Mammary epithelial cell (primary cell): ENCODE measurements at regions of chr7 and their contacts with region 1.

Region 1: DNA sequence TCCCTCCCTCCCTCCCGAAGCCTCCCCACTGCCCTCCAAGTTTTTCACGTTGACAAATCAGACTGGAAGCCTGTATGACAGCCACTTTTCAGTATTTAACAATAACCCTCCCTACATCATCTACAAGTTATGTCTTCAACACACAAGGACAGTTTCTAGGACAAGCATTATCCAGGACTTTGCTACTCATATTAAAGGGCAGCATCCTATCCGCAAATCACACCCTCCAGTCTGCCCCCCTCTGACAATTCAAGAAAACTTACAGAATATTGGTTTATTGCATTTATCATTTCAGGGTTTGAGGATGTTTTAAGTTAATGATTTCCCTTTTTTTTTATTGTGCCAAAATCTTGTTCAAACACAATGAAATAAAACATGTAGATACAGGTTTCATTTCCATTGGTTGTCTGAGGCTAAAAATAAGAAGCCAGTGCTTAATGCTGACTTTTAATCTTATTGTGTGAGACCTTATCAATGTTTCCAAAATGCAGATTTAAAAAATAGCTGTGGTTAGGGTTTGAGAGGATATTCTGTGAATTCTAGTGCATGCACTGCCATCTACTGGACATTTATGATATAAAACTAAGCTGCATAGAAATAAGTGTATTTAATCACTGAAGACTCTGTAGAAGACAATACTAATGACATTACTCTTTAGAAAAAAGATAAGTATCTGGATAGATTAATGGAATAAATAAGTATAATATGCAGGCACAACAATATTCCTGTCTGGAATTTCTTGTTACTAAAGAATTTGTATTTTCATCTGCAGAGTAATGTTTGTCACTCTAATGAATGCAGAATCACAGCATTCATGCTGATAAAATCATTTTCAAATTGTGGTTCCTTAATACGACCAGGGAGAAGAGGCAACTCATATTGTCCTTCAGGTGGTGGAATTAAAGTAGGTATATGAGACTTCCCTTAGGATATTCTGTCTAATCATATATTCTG is 64.1 kb downstream of the CAV1 start:
- DNase-seq: peak; percentile 44
- H3K4me3 ChIP-seq: no peak overlapping the region
- H3K27ac ChIP-seq: peak overlapping the region; percentile 32
- H3K4me1 ChIP-seq: peaks cover 16% of the 10 kb centered on the region
- H3K27me3 ChIP-seq: no peaks in the 10 kb centered on the region
- CTCF ChIP-seq: peak; percentile 45 to 57

Region 2: GRCh38 chr7:116138202-116138801 is 450.6 kb before region 1 on chr7:
- CTCF ChIA-PET with region 1: no interaction called
- dilution Hi-C with region 1: no loop called
- in situ Hi-C with region 1: no loop called
- intact Hi-C with region 1: loop called (anchors 1 kb)
- DNase-seq: peak; percentile 69
- H3K4me3 ChIP-seq: no peak overlapping the region
- H3K27ac ChIP-seq: peak overlapping the region; percentile 61
- H3K4me1 ChIP-seq: peaks cover 21% of the 10 kb centered on the region
- H3K27me3 ChIP-seq: no peaks in the 10 kb centered on the region
- CTCF ChIP-seq: peak; percentile 82 to 85

Region 3: DNA sequence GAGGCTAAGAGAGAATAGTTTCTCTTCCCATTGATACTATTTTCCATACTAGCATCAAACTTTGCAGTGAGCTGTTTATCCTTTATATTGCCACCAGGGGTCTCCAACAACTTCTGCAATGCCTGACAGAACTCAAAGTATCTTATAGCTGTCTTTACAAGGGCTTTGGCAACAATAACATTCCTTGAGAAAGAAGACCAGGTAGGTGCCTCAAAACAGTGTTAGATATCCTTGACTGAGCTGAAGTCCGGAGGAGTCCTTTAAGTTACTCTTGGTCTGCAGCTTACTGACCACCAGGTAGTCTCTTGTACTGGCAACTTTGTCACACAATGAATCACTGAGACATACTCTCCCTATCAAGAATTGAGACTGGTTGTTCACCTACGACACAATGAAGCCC is 408.6 kb before region 1 on chr7:
- CTCF ChIA-PET with region 1: interaction called, 4 read pairs
- dilution Hi-C with region 1: no loop called
- in situ Hi-C with region 1: no loop called
- intact Hi-C with region 1: loop called (anchors 1 kb)
- DNase-seq: peak; percentile 52
- H3K4me3 ChIP-seq: no peak overlapping the region
- H3K27ac ChIP-seq: no peak overlapping the region
- H3K4me1 ChIP-seq: peaks cover 26% of the 10 kb centered on the region
- H3K27me3 ChIP-seq: no peaks in the 10 kb centered on the region
- CTCF ChIP-seq: peak; percentile 79 to 86

Region 4: GRCh38 chr7:116443101-116443523 is 145.8 kb before region 1 on chr7:
- CTCF ChIA-PET with region 1: no interaction called
- dilution Hi-C with region 1: no loop called
- in situ Hi-C with region 1: no loop called
- intact Hi-C with region 1: loop called (anchors 5 kb)
- DNase-seq: peak; percentile 90
- H3K4me3 ChIP-seq: no peak overlapping the region
- H3K27ac ChIP-seq: peak overlapping the region; percentile 98
- H3K4me1 ChIP-seq: peaks cover 30% of the 10 kb centered on the region
- H3K27me3 ChIP-seq: no peaks in the 10 kb centered on the region
- CTCF ChIP-seq: no peak

Region 5: GRCh38 chr7:116478834-116479233 is 110.1 kb before region 1 on chr7:
- CTCF ChIA-PET with region 1: no interaction called
- dilution Hi-C with region 1: no loop called
- in situ Hi-C with region 1: no loop called
- intact Hi-C with region 1: no loop called
- DNase-seq: no peak
- H3K4me3 ChIP-seq: no peak overlapping the region
- H3K27ac ChIP-seq: no peak overlapping the region
- H3K4me1 ChIP-seq: peaks cover 3% of the 10 kb centered on the region
- H3K27me3 ChIP-seq: no peaks in the 10 kb centered on the region
- CTCF ChIP-seq: no peak

Region 6: GRCh38 chr7:116715077-116715476 is 126.2 kb after region 1 on chr7:
- CTCF ChIA-PET with region 1: interaction called, 3 read pairs
- dilution Hi-C with region 1: no loop called
- in situ Hi-C with region 1: no loop called
- intact Hi-C with region 1: loop called (anchors 5 kb)
- DNase-seq: no peak
- H3K4me3 ChIP-seq: no peak overlapping the region
- H3K27ac ChIP-seq: no peak overlapping the region
- H3K4me1 ChIP-seq: peaks cover 27% of the 10 kb centered on the region
- H3K27me3 ChIP-seq: no peaks in the 10 kb centered on the region
- CTCF ChIP-seq: peak in 1 of 2 donors; percentile 21

Region 7: GRCh38 chr7:116809636-116810266 is 220.8 kb after region 1 on chr7:
- CTCF ChIA-PET with region 1: interaction called, 3 read pairs
- dilution Hi-C with region 1: no loop called
- in situ Hi-C with region 1: loop called (anchors 5 kb)
- intact Hi-C with region 1: loop called (anchors 1 kb)
- DNase-seq: peak; percentile 56
- H3K4me3 ChIP-seq: no peak overlapping the region
- H3K27ac ChIP-seq: no peak overlapping the region
- H3K4me1 ChIP-seq: peaks cover 3% of the 10 kb centered on the region
- H3K27me3 ChIP-seq: no peaks in the 10 kb centered on the region
- CTCF ChIP-seq: peak; percentile 45 to 65